ENCODE measurements at regions of chr20 and their contacts with region 1.

Region 1: DNA sequence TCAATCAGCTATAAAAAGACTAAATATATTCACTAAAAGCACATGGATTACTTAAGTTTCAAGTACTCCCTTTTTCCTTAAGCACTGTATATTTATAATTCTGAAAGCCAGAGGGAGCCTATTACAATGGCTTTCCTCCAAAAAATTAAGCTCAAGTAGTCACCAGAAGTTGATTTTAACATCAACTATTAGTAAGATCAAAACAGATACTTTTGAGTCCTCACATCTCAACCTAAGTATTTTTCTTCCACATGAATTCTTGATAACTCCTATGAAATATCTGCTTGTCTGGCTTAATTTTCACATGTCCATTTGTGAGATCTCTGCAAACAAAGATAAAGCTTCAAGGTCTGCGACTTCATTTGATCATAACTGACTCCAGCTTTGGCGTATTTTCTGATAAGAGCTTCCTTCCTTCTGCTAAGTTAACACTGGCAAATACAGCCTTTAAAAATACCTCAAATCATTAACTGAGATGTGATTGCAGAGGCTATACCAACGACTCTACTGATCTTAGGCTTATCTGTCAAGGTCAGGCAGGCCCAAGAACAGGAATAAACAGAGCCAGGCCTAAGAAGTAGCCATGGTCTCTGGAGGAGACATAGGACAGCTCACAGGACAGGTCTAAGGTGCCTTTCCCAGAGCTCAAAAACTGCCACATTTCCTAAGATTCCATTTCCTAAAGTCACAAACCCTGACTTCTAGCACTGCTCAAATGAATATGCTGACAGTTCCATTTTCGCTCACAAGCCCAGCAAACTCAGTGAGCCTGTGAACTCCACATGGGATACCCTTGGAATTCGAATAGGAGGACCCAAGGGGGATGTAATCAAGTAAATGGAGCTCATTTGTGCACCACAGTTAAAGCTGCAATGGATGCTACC is 10.0 kb downstream of the SNX5 start:
- DNase-seq: no peak
- ATAC-seq: no peak
- H3K4me3 Mint-ChIP-seq: no peak overlapping the region
- H3K27ac Mint-ChIP-seq: peak overlapping the region; percentile 78
- H3K4me1 Mint-ChIP-seq: peaks cover 78% of the 10 kb centered on the region
- H3K27me3 Mint-ChIP-seq: no peaks in the 10 kb centered on the region

Region 2: GRCh38 chr20:17946572-17947473 is 11.8 kb before region 1 on chr20:
- CTCF ChIA-PET with region 1: interaction called, 4 read pairs
- POLR2A ChIA-PET with region 1: interaction called, 3 read pairs
- intact Hi-C with region 1: loop called in 1 of 2 experiments (anchors 1 kb)
- DNase-seq: no peak
- ATAC-seq: no peak
- H3K4me3 Mint-ChIP-seq: no peak overlapping the region
- H3K27ac Mint-ChIP-seq: no peak overlapping the region
- H3K4me1 Mint-ChIP-seq: peaks cover 3% of the 10 kb centered on the region
- H3K27me3 Mint-ChIP-seq: no peaks in the 10 kb centered on the region

Region 3: DNA sequence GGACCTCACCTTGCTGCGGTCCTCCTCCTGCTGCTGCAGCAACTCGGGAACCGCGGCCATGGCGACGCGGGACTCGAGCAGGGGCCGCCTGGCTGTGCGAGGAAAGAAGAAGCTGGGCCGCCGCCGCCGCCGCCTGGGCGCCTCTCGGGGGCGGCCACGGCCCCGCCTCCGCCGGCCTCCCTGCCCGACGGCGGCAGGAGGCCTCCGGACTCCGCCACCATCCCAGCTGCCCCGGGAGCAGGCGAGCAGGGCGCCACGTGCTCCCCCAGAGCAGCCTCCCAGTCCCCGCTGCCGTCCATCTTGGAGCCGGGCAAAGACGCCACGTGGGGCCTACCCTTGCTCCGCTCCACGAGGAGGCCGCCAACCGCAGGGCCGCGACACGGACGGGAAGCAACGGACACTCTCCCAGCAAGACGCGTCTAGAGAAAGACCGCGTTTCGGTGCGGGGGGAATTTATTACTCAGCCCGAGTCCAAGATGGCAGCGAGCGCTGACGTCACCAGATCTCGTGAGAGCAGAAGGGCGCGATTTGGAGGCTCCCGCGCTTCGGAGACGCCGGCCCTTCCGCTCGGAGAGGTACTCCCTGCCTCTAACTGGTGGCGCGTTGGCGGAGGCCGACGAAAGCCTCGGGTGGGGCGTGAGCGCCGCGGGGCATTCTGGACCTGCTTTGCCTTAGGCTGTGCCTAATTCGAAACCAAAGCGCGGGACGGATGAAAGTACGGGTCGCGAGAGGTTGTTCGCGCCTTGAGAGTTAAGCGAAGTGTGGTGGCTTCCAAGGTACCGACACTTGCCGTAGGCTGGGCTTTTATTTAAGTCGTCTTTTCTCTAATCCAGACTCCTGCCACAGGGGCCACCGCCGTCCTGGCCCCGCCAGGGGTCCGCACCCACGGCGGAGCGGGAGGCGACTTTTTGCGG is 10.0 kb after region 1 on chr20 and contains the starts of genes MGME1 and SNX5:
- CTCF ChIA-PET with region 1: interaction called, 6 read pairs
- POLR2A ChIA-PET with region 1: interaction called, 5 read pairs
- intact Hi-C with region 1: loop called in 1 of 2 experiments (anchors 1 kb)
- DNase-seq: peak; percentile 100
- ATAC-seq: peak; percentile 91
- H3K4me3 Mint-ChIP-seq: peak within 1 kb of the TSS; percentile 87
- H3K27ac Mint-ChIP-seq: peak within 1 kb of the TSS; percentile 99
- H3K4me1 Mint-ChIP-seq: peaks cover 49% of the 10 kb centered on the region
- H3K27me3 Mint-ChIP-seq: no peaks in the 10 kb centered on the region
- total RNA-seq, gene MGME1: 24.1 to 29.7 TPM
- total RNA-seq, gene SNX5: 204 to 227 TPM